Activated CD4-positive, alpha-beta memory T cell treated with anti-CD3 and anti-CD28 coated beads for 36 hours (primary cell): ENCODE measurements at regions of chr18 and their contacts with region 1.

Region 1: DNA sequence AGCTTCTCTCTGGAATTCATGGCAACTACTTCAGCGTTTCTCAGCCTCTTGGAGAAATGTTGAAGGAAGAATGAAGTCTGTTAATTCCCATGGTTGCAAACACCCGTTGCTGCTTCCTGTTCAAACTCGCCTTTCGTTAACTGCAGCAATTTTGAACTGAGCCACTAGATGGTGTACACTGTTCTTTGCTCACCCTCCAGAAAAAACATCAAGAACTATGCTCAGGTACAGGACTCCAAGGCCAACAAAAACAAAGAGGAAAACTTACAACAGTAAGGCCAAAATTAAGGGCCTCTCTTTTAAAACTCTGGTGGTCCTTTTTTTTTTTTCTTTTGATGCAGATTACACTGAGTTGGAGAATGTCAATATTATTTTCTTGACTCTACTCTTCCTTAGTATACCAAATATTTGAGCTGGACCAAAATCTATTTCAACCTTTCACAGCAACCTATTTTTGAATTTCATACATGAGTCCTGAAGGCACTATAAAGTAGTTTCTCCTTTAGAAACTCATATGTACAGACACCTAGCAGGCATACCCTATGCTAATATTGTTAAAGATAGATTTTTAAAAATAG is 58.2 kb downstream of the KLHL14 start:
- DNase-seq: peak; percentile 14
- H3K4me3 Mint-ChIP-seq: no peak overlapping the region
- H3K27ac Mint-ChIP-seq: no peak overlapping the region
- H3K4me1 Mint-ChIP-seq: peaks cover 2% of the 10 kb centered on the region
- H3K27me3 Mint-ChIP-seq: no peaks in the 10 kb centered on the region

Region 2: DNA sequence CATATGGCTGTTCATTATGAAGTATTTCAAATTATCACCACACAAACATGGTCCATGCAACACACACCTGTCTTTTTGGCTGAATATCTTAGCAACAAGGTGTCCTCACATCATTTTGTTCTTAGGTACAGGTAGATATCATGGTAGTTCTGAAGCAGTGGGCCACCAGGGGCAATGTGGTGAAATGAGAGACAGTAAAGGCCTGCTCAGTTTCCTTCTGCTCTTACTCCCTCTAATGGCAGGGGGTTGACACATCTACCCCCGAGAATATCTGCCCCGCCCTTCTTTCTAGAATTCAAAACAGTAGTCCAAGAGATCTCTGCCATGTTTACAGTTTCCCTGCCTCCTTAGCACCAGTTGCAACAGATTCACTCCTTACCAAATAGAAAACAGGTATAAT is 205.1 kb after region 1 on chr18:
- CTCF ChIA-PET with region 1: no interaction called
- POLR2A ChIA-PET with region 1: no interaction called
- intact Hi-C with region 1: loop called (anchors 5 kb)
- DNase-seq: no peak
- H3K4me3 Mint-ChIP-seq: no peak overlapping the region
- H3K27ac Mint-ChIP-seq: no peak overlapping the region
- H3K4me1 Mint-ChIP-seq: no peaks in the 10 kb centered on the region
- H3K27me3 Mint-ChIP-seq: no peaks in the 10 kb centered on the region

Region 3: DNA sequence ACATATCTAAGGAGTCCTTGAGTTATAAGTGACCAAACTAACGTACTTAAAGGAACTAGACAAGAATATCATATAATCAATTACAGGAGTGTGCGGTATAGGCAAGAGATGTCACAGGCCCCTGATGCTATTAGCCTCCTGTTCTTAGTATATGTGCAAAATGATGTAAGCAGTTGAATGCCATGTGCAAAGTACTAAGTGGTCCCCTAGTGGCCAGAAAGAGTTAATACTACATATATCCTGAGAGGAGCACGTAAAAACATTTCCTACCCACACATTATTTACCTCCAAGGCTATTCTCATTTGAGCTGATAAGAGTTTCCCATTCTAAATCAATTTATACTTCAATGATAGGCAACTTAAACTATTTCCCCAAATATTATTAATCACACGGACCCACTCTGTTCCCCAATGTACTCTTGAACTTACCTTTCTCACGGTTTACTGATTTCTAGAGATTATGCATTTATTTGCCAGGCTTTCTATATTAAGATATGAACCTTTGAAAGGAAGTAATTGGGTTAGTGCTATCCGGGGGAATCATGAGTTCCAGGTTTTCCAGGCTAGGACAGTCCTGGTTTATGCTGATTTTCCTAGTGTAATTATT is 216.1 kb after region 1 on chr18:
- CTCF ChIA-PET with region 1: interaction called, 3 read pairs
- POLR2A ChIA-PET with region 1: no interaction called
- intact Hi-C with region 1: loop called (anchors 5 kb)
- DNase-seq: no peak
- H3K4me3 Mint-ChIP-seq: no peak overlapping the region
- H3K27ac Mint-ChIP-seq: no peak overlapping the region
- H3K4me1 Mint-ChIP-seq: no peaks in the 10 kb centered on the region
- H3K27me3 Mint-ChIP-seq: no peaks in the 10 kb centered on the region

Region 4: GRCh38 chr18:33201509-33201926 is 486.9 kb after region 1 on chr18:
- CTCF ChIA-PET with region 1: no interaction called
- POLR2A ChIA-PET with region 1: no interaction called
- intact Hi-C with region 1: loop called (anchors 5 kb)
- DNase-seq: no peak
- H3K4me3 Mint-ChIP-seq: no peak overlapping the region
- H3K27ac Mint-ChIP-seq: no peak overlapping the region
- H3K4me1 Mint-ChIP-seq: no peaks in the 10 kb centered on the region
- H3K27me3 Mint-ChIP-seq: no peaks in the 10 kb centered on the region